ENCODE measurements at regions of chr2 and their contacts with region 1.

Region 1: DNA sequence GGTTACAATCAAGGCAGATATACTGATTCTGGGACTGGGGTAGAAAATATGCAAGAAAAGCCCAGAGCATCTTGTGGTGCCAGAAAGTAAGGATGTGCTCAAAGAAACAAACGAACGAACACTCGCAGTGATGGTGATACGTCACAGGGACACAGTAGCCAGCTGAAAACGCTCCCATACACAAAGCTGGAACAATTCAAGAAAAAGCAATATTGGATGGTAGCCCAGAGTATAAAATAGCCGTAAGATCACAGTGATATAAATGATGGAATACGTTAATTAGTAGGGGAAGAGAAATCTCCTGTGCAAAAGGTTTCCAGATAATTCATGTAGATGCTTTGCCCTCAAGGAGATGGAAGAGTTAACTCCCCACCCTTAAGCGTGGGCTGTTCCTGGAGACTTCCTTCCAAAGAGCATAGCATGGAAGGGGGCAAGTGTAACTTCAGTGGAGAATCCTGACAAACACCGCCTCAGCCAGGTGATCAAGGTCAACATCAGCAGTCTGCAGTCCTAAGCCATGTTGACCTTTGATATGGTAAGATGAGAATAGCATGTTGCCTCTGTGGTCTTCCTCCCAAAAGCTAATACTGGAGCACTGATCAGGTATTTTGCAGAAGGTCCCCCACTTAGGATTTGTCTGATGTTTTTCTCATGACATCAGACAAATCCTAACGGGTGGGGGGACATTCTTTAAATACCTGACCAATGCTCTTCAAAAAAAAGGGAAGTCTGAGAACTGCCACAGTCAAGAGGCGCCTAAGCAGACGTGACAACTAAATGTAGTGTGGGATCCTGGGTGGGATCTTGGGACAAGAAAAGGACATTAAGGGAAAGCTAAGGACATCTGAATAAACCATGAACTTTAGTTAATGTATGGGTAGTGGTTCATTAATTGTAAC is 99.0 kb downstream of the NCK2 start:
- DNase-seq: no peak
- ATAC-seq: no peak
- H3K4me3 ChIP-seq: no peak overlapping the region
- H3K4me3 Mint-ChIP-seq: peak overlapping the region in 1 of 3 donors; percentile 5
- H3K27ac ChIP-seq: no peak overlapping the region
- H3K27ac Mint-ChIP-seq: peak overlapping the region; percentile 26 to 64
- H3K4me1 ChIP-seq: peaks cover 13 to 60% of the 10 kb centered on the region in 2 experiments
- H3K4me1 Mint-ChIP-seq: peaks cover 89 to 94% (median 89%) of the 10 kb centered on the region in 3 donors
- H3K27me3 ChIP-seq: no peaks in the 10 kb centered on the region
- H3K27me3 Mint-ChIP-seq: no peaks in the 10 kb centered on the region

Region 2: GRCh38 chr2:105734762-105735538 is 108.8 kb before region 1 on chr2:
- CTCF ChIA-PET with region 1: no interaction called
- POLR2A ChIA-PET with region 1: no interaction called
- DNase-seq: no peak
- ATAC-seq: no peak
- H3K4me3 ChIP-seq: no peak overlapping the region
- H3K4me3 Mint-ChIP-seq: no peak overlapping the region
- H3K27ac ChIP-seq: no peak overlapping the region
- H3K27ac Mint-ChIP-seq: peak overlapping the region; percentile 21 to 82
- H3K4me1 ChIP-seq: peaks cover 20 to 31% of the 10 kb centered on the region in 2 experiments
- H3K4me1 Mint-ChIP-seq: peaks cover 51 to 76% (median 68%) of the 10 kb centered on the region in 3 donors
- H3K27me3 ChIP-seq: no peaks in the 10 kb centered on the region
- H3K27me3 Mint-ChIP-seq: no peaks in the 10 kb centered on the region

Region 3: GRCh38 chr2:105749583-105750400 is 93.9 kb before region 1 on chr2:
- CTCF ChIA-PET with region 1: no interaction called
- POLR2A ChIA-PET with region 1: no interaction called
- DNase-seq: peak in 5 of 35 experiments; percentile 26 to 58 (median 41)
- ATAC-seq: no peak
- H3K4me3 ChIP-seq: peak overlapping the region; percentile 17 to 78
- H3K4me3 Mint-ChIP-seq: peak overlapping the region; percentile 76 to 98 (median 77)
- H3K27ac ChIP-seq: peak overlapping the region; percentile 90
- H3K27ac Mint-ChIP-seq: peak overlapping the region; percentile 92 to 98
- H3K4me1 ChIP-seq: peaks cover 71 to 84% of the 10 kb centered on the region in 2 experiments
- H3K4me1 Mint-ChIP-seq: peaks cover 83 to 90% (median 83%) of the 10 kb centered on the region in 3 donors
- H3K27me3 ChIP-seq: no peaks in the 10 kb centered on the region
- H3K27me3 Mint-ChIP-seq: no peaks in the 10 kb centered on the region

Region 4: GRCh38 chr2:106572541-106573450 is 729.1 kb after region 1 on chr2:
- CTCF ChIA-PET with region 1: no interaction called
- POLR2A ChIA-PET with region 1: interaction called in 1 of 2 experiments, 15 read pairs
- DNase-seq: peak in 1 of 35 experiments; percentile 9
- ATAC-seq: no peak
- H3K4me3 ChIP-seq: no peak overlapping the region
- H3K4me3 Mint-ChIP-seq: no peak overlapping the region
- H3K27ac ChIP-seq: no peak overlapping the region
- H3K27ac Mint-ChIP-seq: no peak overlapping the region
- H3K4me1 ChIP-seq: no peaks in the 10 kb centered on the region
- H3K4me1 Mint-ChIP-seq: no peaks in the 10 kb centered on the region
- H3K27me3 ChIP-seq: peaks cover 0 to 26% of the 10 kb centered on the region in 2 experiments
- H3K27me3 Mint-ChIP-seq: peaks cover 14 to 23% of the 10 kb centered on the region in 2 donors